CD8-positive, alpha-beta T cell (primary cell): ENCODE measurements at regions of chr11 and their contacts with region 1.

Region 1: GRCh38 chr11:129992161-129992944 is 10.3 kb downstream of the PRDM10 start:
- DNase-seq: peak in 6 of 9 experiments; percentile 20 to 63 (median 48)
- ATAC-seq: peak; percentile 91
- H3K4me3 ChIP-seq: no peak overlapping the region
- H3K4me3 Mint-ChIP-seq: no peak overlapping the region
- H3K27ac ChIP-seq: no peak overlapping the region
- H3K27ac Mint-ChIP-seq: peak overlapping the region; percentile 46
- H3K4me1 ChIP-seq: no peaks in the 10 kb centered on the region
- H3K4me1 Mint-ChIP-seq: peaks cover 10% of the 10 kb centered on the region
- H3K27me3 ChIP-seq: no peaks in the 10 kb centered on the region
- H3K27me3 Mint-ChIP-seq: no peaks in the 10 kb centered on the region
- CTCF ChIP-seq: peak; percentile 42

Region 2: DNA sequence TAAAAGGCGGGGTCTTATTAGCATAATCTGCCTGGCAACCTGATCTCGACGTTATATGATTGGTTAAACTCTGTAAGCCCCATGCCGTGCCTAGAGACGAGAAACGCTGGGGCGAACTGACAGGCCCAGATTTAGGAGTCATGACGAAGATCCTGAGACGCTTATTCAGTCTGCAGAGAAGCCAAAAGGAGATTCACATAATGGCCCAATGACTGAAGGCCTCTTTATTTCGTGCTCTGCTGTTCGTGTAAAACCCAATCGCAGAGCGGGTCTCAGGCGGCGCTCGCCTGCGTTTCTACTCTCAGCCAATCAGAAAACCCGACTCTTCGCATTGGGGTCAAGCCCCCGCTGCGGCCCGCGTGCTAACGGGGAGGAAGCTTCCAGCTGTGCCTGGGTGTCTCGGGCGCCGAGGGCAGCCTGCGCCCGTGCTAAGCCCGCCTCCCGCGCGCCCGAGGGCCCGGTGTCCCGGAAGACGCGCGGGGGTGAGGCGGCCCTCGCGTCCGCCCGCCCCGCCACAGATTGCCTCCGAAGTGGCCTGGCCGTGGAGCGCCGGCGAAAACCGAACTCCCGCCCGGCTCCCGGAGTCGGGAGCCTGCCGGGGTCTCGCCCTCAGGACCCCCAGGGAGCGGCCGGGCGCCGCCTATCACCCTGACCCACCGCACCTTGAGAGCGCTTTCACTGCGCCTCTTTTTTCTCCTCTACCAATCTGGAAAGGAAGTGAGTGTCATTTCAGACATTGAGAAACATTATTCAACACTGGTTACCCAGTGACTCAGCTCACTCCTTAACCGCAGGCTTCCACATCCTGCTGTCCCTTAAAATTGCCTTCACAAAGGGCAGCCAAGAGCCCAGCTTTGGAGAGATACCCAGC is 10.7 kb after region 1 on chr11:
- CTCF ChIA-PET with region 1: interaction called, 8 read pairs
- POLR2A ChIA-PET with region 1: interaction called, 20 read pairs
- intact Hi-C with region 1: loop called in 1 of 2 experiments (anchors 1 kb)
- DNase-seq: peak; percentile 82 to 96 (median 89)
- ATAC-seq: peak; percentile 77
- H3K4me3 ChIP-seq: peak overlapping the region; percentile 69 to 71
- H3K4me3 Mint-ChIP-seq: peak overlapping the region; percentile 99
- H3K27ac ChIP-seq: peak overlapping the region; percentile 99 to 100
- H3K27ac Mint-ChIP-seq: peak overlapping the region; percentile 100
- H3K4me1 ChIP-seq: peaks cover 24% of the 10 kb centered on the region
- H3K4me1 Mint-ChIP-seq: peaks cover 37% of the 10 kb centered on the region
- H3K27me3 ChIP-seq: no peaks in the 10 kb centered on the region
- H3K27me3 Mint-ChIP-seq: no peaks in the 10 kb centered on the region
- CTCF ChIP-seq: no peak